Endothelial cell of umbilical vein (primary cell): ENCODE measurements at regions of chr15 and their contacts with region 1.

Region 1: GRCh38 chr15:68316061-68316804 is 38.7 kb downstream of the FEM1B start:
- DNase-seq: peak; percentile 29
- H3K4me3 ChIP-seq: no peak overlapping the region
- H3K27ac ChIP-seq: no peak overlapping the region
- H3K4me1 ChIP-seq: peaks cover 6% of the 10 kb centered on the region
- H3K27me3 ChIP-seq: no peaks in the 10 kb centered on the region
- CTCF ChIP-seq: peak; percentile 19 to 60
- POLR2A ChIP-seq: no peak

Region 2: GRCh38 chr15:68383161-68384074 is 67.2 kb after region 1 on chr15:
- CTCF ChIA-PET with region 1: interaction called, 12 read pairs
- POLR2A ChIA-PET with region 1: no interaction called
- dilution Hi-C with region 1: no loop called
- intact Hi-C with region 1: loop called (anchors 2 kb)
- DNase-seq: peak; percentile 69
- H3K4me3 ChIP-seq: no peak overlapping the region
- H3K27ac ChIP-seq: peak overlapping the region; percentile 50
- H3K4me1 ChIP-seq: peaks cover 37% of the 10 kb centered on the region
- H3K27me3 ChIP-seq: no peaks in the 10 kb centered on the region
- CTCF ChIP-seq: peak; percentile 61 to 69
- POLR2A ChIP-seq: no peak

Region 3: DNA sequence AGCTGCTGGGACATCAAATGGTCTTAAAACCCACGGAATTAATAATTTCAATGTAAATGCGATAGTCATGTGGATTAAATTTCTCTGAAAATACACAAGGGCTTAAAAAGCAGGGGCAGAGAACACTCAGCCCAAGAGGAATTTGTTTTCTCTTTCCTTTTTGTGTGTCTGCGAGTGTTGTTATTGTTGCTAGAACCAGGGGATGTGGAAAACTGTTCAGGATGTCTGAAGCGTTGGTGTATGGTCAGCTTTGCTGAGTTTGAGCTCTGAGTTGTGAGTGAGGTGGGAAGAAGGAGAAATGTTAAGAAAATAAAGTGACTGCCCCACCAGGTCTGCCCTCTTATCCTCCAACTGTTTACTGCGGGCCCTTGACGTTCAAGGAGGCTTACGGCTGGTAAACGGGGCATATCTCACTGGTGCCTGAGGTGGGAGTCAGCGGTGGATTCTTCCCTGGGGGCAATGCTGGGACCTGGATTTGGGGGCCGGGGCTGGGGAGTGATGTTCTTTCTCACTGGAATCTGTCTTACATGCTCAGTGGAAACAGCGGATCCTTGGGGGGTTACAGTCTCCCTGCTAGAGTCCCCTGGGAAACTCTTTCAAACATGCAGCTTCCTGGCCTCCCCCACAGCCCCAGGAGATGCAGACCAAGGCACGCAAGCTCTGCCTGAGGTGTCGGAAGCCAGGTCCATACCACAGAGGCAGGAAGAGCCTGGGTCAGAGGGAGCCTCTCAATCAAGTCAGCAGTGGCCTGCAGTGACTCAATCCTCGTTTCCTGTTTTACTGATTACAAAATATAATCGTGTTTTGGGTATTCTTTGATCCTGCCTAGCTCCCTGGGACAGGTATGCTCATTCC is 73.9 kb after region 1 on chr15:
- CTCF ChIA-PET with region 1: interaction called, 12 read pairs
- POLR2A ChIA-PET with region 1: no interaction called
- dilution Hi-C with region 1: no loop called
- intact Hi-C with region 1: no loop called
- DNase-seq: peak; percentile 80
- H3K4me3 ChIP-seq: no peak overlapping the region
- H3K27ac ChIP-seq: peak overlapping the region; percentile 78
- H3K4me1 ChIP-seq: peaks cover 27% of the 10 kb centered on the region
- H3K27me3 ChIP-seq: no peaks in the 10 kb centered on the region
- CTCF ChIP-seq: no peak
- POLR2A ChIP-seq: peak; percentile 47

Region 4: DNA sequence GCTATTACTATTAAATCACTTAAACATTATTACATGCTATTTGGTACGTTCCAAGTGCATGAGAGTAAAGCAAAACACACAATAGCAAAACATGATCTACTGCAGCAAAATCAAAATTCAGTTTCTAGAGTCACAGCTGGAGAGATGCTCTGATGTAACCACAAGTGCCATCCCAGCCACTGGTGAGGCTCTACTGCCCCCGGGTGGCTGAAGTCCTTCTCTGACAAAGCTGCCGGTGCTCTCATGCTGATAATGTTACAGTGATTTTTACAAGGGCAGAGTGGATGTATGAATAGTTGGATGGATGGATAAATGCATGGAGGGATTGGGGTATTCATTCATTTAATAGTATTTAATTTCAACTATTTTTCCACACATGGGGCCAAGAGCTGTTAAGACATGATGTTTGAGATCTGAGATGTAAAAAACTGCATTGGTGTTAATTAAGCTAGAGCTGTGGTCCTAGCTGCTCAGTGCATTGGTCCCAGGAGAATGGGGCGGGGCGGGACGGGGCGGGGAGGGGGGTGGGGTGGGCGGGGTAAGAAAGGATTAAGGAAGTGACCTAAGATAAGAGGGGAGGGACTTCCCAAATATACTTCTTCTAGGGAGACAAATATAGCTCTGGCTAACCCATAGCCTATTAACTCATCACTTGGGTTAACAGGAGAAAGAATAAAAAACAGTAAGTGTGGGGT is 608.8 kb after region 1 on chr15:
- CTCF ChIA-PET with region 1: interaction called, 10 read pairs
- POLR2A ChIA-PET with region 1: no interaction called
- dilution Hi-C with region 1: no loop called
- intact Hi-C with region 1: no loop called
- DNase-seq: peak; percentile 75
- H3K4me3 ChIP-seq: no peak overlapping the region
- H3K27ac ChIP-seq: no peak overlapping the region
- H3K4me1 ChIP-seq: no peaks in the 10 kb centered on the region
- H3K27me3 ChIP-seq: peaks cover 5 to 37% of the 10 kb centered on the region in 2 experiments
- CTCF ChIP-seq: peak; percentile 72 to 78
- POLR2A ChIP-seq: no peak